Activated T-helper 1 cell treated with anti-CD3 and anti-CD28 coated beads, Interleukin-12 subunit alpha, Interleukin-12 subunit beta, Interleukin-2, Interleukin-4 antibody, amounts not matched to agents 30 ng/mL and 10 ng/mL and 1 ng/mL, durations not matched to agents 14 hours and 24 hours and 36 hours (primary cell): ENCODE measurements at regions of chr5 and their contacts with region 1.

Region 1: GRCh38 chr5:76521240-76521758 is 101.9 kb downstream of the F2RL2 start:
- DNase-seq: no peak
- H3K4me3 Mint-ChIP-seq: peak overlapping the region; percentile 63
- H3K27ac Mint-ChIP-seq: peak overlapping the region; percentile 91
- H3K4me1 Mint-ChIP-seq: peaks cover 58% of the 10 kb centered on the region
- H3K27me3 Mint-ChIP-seq: no peaks in the 10 kb centered on the region

Region 2: GRCh38 chr5:75342836-75343235 is 1178.5 kb before region 1 on chr5:
- intact Hi-C with region 1: loop called (anchors 2 kb)
- DNase-seq: no peak
- H3K4me3 Mint-ChIP-seq: no peak overlapping the region
- H3K27ac Mint-ChIP-seq: no peak overlapping the region
- H3K4me1 Mint-ChIP-seq: peaks cover 47% of the 10 kb centered on the region
- H3K27me3 Mint-ChIP-seq: no peaks in the 10 kb centered on the region

Region 3: GRCh38 chr5:76473661-76474060 is 47.6 kb before region 1 on chr5:
- intact Hi-C with region 1: loop called (anchors 1 kb)
- DNase-seq: peak; percentile 55
- H3K4me3 Mint-ChIP-seq: peak overlapping the region; percentile 47
- H3K27ac Mint-ChIP-seq: peak overlapping the region; percentile 82
- H3K4me1 Mint-ChIP-seq: peaks cover 73% of the 10 kb centered on the region
- H3K27me3 Mint-ChIP-seq: no peaks in the 10 kb centered on the region

Region 4: DNA sequence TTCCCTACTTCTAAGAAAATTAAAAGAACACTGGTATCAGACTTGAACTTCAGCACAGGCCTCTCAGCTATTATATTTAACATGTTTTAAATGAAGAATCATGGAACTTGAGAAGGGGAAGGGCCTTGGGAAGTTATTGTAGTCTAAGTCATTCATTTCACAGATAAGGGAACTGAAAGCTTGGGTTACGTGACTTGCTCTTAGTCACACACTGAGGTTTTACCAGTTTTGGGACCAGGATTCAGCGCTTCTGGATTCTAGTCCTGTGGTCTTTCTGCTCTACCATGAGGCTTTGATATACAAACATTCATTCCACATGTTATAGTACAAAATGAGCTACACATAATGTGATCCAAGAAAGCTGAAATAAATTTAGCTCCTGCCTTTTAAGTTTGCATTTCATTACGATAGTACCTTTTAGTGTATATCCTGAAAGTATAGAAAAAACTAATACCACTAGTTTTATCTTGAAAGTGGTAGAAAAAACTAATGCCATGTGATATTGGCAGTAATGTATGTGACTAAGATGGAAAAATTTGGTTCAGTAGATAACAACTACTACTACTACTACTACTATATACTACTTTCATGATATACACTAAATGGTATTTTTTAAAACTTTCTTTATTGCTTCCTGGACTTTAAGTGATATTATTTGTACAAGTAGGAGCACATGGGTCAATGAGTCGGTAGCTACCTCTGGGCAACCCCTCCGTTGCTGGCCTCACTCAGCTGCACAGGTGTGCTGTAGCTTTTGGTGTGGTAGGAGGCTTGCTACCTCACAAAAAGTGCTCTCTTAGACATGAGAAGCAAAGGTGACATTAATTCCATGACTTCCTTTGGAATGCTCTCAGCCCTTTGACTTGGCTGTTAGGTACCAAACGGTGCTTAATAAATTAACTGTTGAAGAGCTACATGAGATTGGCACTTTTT is 61.2 kb after region 1 on chr5:
- intact Hi-C with region 1: loop called (anchors 1 kb)
- DNase-seq: no peak
- H3K4me3 Mint-ChIP-seq: no peak overlapping the region
- H3K27ac Mint-ChIP-seq: no peak overlapping the region
- H3K4me1 Mint-ChIP-seq: peaks cover 33% of the 10 kb centered on the region
- H3K27me3 Mint-ChIP-seq: no peaks in the 10 kb centered on the region